T-cell (primary cell): ENCODE measurements at regions of chr5 and their contacts with region 1.

Region 1: DNA sequence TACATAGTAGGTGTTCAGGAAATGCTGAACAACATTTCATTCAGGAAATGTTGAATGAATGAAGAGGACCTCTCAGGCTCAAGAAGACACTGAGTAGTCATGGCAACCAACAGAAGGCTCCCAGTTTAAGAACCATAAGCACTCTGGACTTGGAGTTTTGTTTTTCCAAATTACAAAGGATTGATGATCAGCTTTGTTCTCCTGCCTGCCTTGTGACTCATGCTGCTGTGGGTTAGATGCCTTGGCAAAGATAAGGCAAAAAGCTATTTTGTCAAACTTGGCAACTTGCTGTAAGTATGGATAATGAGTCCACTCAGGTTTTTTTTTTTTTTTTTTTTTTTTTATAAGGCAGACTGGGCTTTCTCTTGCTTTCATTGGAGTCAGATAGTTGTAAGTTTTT is 365.0 kb downstream of the TMEM232 start:
- DNase-seq: no peak
- ATAC-seq: no peak
- H3K4me3 ChIP-seq: no peak overlapping the region
- H3K4me3 Mint-ChIP-seq: no peak overlapping the region
- H3K27ac ChIP-seq: no peak overlapping the region
- H3K27ac Mint-ChIP-seq: no peak overlapping the region
- H3K4me1 ChIP-seq: no peaks in the 10 kb centered on the region
- H3K4me1 Mint-ChIP-seq: no peaks in the 10 kb centered on the region
- H3K27me3 ChIP-seq: no peaks in the 10 kb centered on the region
- H3K27me3 Mint-ChIP-seq: peaks cover 0 to 2% of the 10 kb centered on the region in 2 donors

Region 2: GRCh38 chr5:109619606-109620005 is 741.9 kb before region 1 on chr5:
- CTCF ChIA-PET with region 1: no interaction called
- POLR2A ChIA-PET with region 1: interaction called in 1 of 2 experiments, 10 read pairs
- DNase-seq: no peak
- ATAC-seq: no peak
- H3K4me3 ChIP-seq: no peak overlapping the region
- H3K4me3 Mint-ChIP-seq: no peak overlapping the region
- H3K27ac ChIP-seq: no peak overlapping the region
- H3K27ac Mint-ChIP-seq: no peak overlapping the region
- H3K4me1 ChIP-seq: no peaks in the 10 kb centered on the region
- H3K4me1 Mint-ChIP-seq: no peaks in the 10 kb centered on the region
- H3K27me3 ChIP-seq: no peaks in the 10 kb centered on the region
- H3K27me3 Mint-ChIP-seq: no peaks in the 10 kb centered on the region